Activated B cell treated with CpG ODN at 0.5 μM for 24 hours (primary cell): ENCODE measurements at regions of chr17 and their contacts with region 1.

Region 1: GRCh38 chr17:58317421-58318064 is 11.1 kb downstream of the TSPOAP1 start:
- DNase-seq: peak; percentile 55
- ATAC-seq: peak; percentile 97
- H3K4me3 Mint-ChIP-seq: no peak overlapping the region
- H3K27ac Mint-ChIP-seq: peak overlapping the region; percentile 79
- H3K4me1 Mint-ChIP-seq: peaks cover 15% of the 10 kb centered on the region
- H3K27me3 Mint-ChIP-seq: no peaks in the 10 kb centered on the region
- CTCF ChIP-seq: no peak

Region 2: DNA sequence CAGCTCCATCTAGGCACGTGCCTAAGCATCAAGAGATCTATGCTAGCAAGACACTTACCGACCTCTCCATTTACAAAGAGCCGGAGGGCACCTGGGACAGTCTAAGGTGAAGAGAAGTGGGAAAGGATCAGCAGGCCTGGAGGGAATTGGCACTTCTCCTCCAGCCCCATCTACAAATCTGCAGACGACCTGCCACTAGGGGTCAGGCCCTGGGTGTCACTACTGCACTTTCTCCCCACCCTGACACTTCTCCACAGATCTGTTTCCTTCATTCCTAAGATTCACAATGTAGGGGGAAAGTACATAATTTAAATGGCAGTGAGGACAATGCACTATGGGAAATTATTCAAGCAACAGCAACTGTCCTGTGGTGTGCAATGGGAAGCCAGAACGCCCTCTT is 106.6 kb before region 1 on chr17:
- CTCF ChIA-PET with region 1: no interaction called
- POLR2A ChIA-PET with region 1: no interaction called
- intact Hi-C with region 1: no loop called
- DNase-seq: no peak
- ATAC-seq: no peak
- H3K4me3 Mint-ChIP-seq: no peak overlapping the region
- H3K27ac Mint-ChIP-seq: no peak overlapping the region
- H3K4me1 Mint-ChIP-seq: peaks cover 3% of the 10 kb centered on the region
- H3K27me3 Mint-ChIP-seq: no peaks in the 10 kb centered on the region
- CTCF ChIP-seq: no peak

Region 3: GRCh38 chr17:58279016-58279711 is 38.4 kb before region 1 on chr17:
- CTCF ChIA-PET with region 1: no interaction called
- POLR2A ChIA-PET with region 1: no interaction called
- intact Hi-C with region 1: no loop called
- DNase-seq: no peak
- ATAC-seq: no peak
- H3K4me3 Mint-ChIP-seq: no peak overlapping the region
- H3K27ac Mint-ChIP-seq: no peak overlapping the region
- H3K4me1 Mint-ChIP-seq: peaks cover 5% of the 10 kb centered on the region
- H3K27me3 Mint-ChIP-seq: peaks cover 22% of the 10 kb centered on the region
- CTCF ChIP-seq: no peak

Region 4: DNA sequence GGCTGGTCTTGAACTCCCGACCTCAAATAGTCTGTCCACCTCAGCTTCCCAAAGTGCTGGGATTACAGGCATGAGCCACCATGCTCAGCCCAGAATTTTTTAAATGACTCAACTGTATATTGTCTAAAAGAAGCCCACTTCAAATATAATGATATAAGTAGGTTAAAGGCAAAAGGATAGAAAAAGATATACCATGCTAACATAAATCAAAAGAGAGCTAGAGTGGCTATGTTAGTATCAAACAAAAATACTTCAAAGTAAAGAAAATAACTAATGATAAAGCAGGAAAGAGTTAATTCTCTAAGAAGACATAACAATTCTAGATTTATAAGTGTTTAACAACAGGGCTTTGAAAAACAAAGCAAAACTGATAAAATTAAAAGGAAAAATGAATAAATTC is 23.5 kb before region 1 on chr17:
- CTCF ChIA-PET with region 1: no interaction called
- POLR2A ChIA-PET with region 1: no interaction called
- intact Hi-C with region 1: no loop called
- DNase-seq: no peak
- ATAC-seq: no peak
- H3K4me3 Mint-ChIP-seq: no peak overlapping the region
- H3K27ac Mint-ChIP-seq: no peak overlapping the region
- H3K4me1 Mint-ChIP-seq: no peaks in the 10 kb centered on the region
- H3K27me3 Mint-ChIP-seq: peaks cover 18% of the 10 kb centered on the region
- CTCF ChIP-seq: no peak

Region 5: GRCh38 chr17:58329035-58329809 is 11.7 kb after region 1 on chr17:
- CTCF ChIA-PET with region 1: interaction called, 46 read pairs
- POLR2A ChIA-PET with region 1: interaction called, 3,007 read pairs
- intact Hi-C with region 1: loop called (anchors 1 kb)
- DNase-seq: peak; percentile 75
- ATAC-seq: peak; percentile 36
- H3K4me3 Mint-ChIP-seq: peak overlapping the region; percentile 100
- H3K27ac Mint-ChIP-seq: peak overlapping the region; percentile 93
- H3K4me1 Mint-ChIP-seq: peaks cover 65% of the 10 kb centered on the region
- H3K27me3 Mint-ChIP-seq: peaks cover 2% of the 10 kb centered on the region
- CTCF ChIP-seq: no peak

Region 6: DNA sequence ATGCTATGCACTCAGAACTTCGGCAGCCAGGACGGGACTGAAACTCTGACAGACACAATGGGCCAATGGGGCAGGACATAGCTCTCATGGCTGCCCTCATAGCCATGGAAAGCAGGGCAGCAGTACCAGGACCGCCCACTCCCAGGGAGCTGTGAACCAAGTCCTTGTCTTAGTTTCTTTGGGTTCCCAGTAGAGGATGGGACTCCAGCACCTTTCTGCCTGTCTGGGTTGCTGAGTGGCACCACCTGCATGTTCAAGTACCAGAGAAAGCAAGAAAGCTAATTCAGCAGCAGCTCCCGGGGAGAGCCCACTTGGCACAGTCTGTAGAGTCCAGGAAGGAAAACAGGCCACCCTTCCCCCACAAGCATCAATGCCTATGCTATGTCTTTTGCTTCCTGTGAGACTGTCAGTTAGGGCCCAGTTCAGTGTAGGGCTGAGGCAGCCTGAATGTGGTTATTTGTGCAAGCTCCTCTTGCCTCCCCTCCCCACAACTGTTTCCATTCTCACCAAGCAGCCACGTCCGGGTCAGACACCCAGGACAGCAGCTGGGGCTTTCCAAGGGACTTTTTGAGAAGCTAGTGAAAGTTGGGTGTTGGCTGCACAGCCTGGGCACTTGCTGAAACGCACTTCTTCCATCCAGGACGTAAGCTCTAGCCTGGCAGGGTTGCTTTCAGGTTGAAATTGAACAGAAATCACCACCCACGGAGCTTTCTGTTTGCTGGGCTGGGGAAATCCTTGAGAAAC is 26.7 kb after region 1 on chr17:
- CTCF ChIA-PET with region 1: interaction called, 129 read pairs
- POLR2A ChIA-PET with region 1: interaction called, 3,007 read pairs
- intact Hi-C with region 1: loop called (anchors 1 kb)
- DNase-seq: peak; percentile 71
- ATAC-seq: peak; percentile 83
- H3K4me3 Mint-ChIP-seq: peak overlapping the region; percentile 83
- H3K27ac Mint-ChIP-seq: peak overlapping the region; percentile 99
- H3K4me1 Mint-ChIP-seq: peaks cover 91% of the 10 kb centered on the region
- H3K27me3 Mint-ChIP-seq: no peaks in the 10 kb centered on the region
- CTCF ChIP-seq: no peak

Region 7: DNA sequence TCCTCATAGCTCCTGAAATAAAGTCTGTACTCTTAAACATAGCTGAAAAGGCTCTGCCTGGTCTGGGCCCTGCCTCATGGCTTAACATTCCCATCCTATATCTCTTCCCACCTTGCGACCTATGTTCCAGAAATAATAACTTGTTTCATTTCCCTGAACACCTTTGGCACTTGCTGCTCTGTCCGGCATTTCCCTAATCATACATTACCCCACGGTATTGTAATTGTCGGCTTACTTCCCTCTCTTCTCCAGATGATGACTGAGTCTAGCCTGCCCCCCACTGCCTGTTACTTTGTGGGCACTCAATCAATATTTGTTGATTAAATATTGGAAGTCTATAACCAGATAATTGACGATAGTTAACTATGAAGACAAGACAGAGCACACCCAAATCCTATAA is 57.7 kb after region 1 on chr17:
- CTCF ChIA-PET with region 1: interaction called, 5 read pairs
- POLR2A ChIA-PET with region 1: interaction called, 5 read pairs
- intact Hi-C with region 1: loop called (anchors 1 kb)
- DNase-seq: no peak
- ATAC-seq: no peak
- H3K4me3 Mint-ChIP-seq: no peak overlapping the region
- H3K27ac Mint-ChIP-seq: no peak overlapping the region
- H3K4me1 Mint-ChIP-seq: peaks cover 22% of the 10 kb centered on the region
- H3K27me3 Mint-ChIP-seq: no peaks in the 10 kb centered on the region
- CTCF ChIP-seq: no peak

Region 8: GRCh38 chr17:58447039-58447975 is 129.8 kb after region 1 on chr17:
- CTCF ChIA-PET with region 1: interaction called, 103 read pairs
- POLR2A ChIA-PET with region 1: interaction called, 8 read pairs
- intact Hi-C with region 1: loop called (anchors 1 kb)
- DNase-seq: peak; percentile 43
- ATAC-seq: peak; percentile 93
- H3K4me3 Mint-ChIP-seq: no peak overlapping the region
- H3K27ac Mint-ChIP-seq: no peak overlapping the region
- H3K4me1 Mint-ChIP-seq: peaks cover 11% of the 10 kb centered on the region
- H3K27me3 Mint-ChIP-seq: no peaks in the 10 kb centered on the region
- CTCF ChIP-seq: no peak

Region 9: GRCh38 chr17:58808645-58809563 is 491.4 kb after region 1 on chr17:
- CTCF ChIA-PET with region 1: no interaction called
- POLR2A ChIA-PET with region 1: no interaction called
- intact Hi-C with region 1: no loop called
- DNase-seq: no peak
- ATAC-seq: no peak
- H3K4me3 Mint-ChIP-seq: no peak overlapping the region
- H3K27ac Mint-ChIP-seq: no peak overlapping the region
- H3K4me1 Mint-ChIP-seq: no peaks in the 10 kb centered on the region
- H3K27me3 Mint-ChIP-seq: peaks cover 3% of the 10 kb centered on the region
- CTCF ChIP-seq: no peak